Ovary (tissue), 10 donors: ENCODE measurements at regions of chr18 and their contacts with region 1.

Region 1: GRCh38 chr18:22169007-22169864 is at the start of gene GATA6:
- DNase-seq: peak; percentile 94 to 96 (median 95)
- H3K4me3 ChIP-seq: peak within 1 kb of the TSS; percentile 98
- H3K27ac ChIP-seq: peak within 1 kb of the TSS; percentile 96 to 97
- H3K4me1 ChIP-seq: peaks cover 4% of the 10 kb centered on the region
- H3K27me3 ChIP-seq: no peaks in the 10 kb centered on the region
- CTCF ChIP-seq: peak in 2 of 3 donors; percentile 50 to 64
- EP300 ChIP-seq: no peak
- POLR2A ChIP-seq: peak; percentile 83
- total RNA-seq, gene GATA6: 82.4 to 221 (median 140) TPM

Region 2: GRCh38 chr18:21997207-21998143 is 171.8 kb before region 1 on chr18:
- intact Hi-C with region 1: loop called in 1 of 4 experiments (anchors 10 kb)
- DNase-seq: peak in 2 of 5 donors; percentile 19 to 38
- H3K4me3 ChIP-seq: no peak overlapping the region
- H3K27ac ChIP-seq: no peak overlapping the region
- H3K4me1 ChIP-seq: no peaks in the 10 kb centered on the region
- H3K27me3 ChIP-seq: no peaks in the 10 kb centered on the region
- CTCF ChIP-seq: peak; percentile 38 to 64 (median 52)
- EP300 ChIP-seq: no peak
- POLR2A ChIP-seq: no peak

Region 3: DNA sequence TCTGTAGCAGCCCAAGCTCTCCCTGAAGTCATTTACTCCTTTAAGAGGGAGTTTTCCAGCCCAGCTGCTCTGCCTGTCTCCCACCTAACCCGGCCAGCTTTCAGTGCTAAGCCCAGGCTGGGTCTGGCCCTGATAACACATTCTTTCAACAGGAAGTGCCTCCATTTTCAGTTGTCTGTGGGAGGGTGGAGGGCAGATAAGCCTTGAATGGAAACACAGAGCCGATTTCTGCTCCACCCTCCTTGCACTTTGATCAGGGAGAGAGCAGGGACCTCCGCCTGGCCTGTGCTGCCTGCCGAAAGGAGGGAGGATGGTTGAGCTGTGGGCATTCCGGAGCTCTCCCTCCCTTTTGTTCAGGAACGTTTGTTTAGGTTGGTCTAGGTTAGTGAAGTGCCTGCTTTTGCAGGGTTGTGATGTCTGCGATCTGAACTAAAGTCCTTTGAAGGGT is 24.9 kb after region 1 on chr18:
- intact Hi-C with region 1: no loop called
- DNase-seq: peak in 3 of 5 donors; percentile 52 to 65 (median 59)
- H3K4me3 ChIP-seq: peak overlapping the region; percentile 10
- H3K27ac ChIP-seq: peak overlapping the region; percentile 22 to 70
- H3K4me1 ChIP-seq: peaks cover 14% of the 10 kb centered on the region
- H3K27me3 ChIP-seq: no peaks in the 10 kb centered on the region
- CTCF ChIP-seq: no peak
- EP300 ChIP-seq: no peak
- POLR2A ChIP-seq: no peak

Region 4: DNA sequence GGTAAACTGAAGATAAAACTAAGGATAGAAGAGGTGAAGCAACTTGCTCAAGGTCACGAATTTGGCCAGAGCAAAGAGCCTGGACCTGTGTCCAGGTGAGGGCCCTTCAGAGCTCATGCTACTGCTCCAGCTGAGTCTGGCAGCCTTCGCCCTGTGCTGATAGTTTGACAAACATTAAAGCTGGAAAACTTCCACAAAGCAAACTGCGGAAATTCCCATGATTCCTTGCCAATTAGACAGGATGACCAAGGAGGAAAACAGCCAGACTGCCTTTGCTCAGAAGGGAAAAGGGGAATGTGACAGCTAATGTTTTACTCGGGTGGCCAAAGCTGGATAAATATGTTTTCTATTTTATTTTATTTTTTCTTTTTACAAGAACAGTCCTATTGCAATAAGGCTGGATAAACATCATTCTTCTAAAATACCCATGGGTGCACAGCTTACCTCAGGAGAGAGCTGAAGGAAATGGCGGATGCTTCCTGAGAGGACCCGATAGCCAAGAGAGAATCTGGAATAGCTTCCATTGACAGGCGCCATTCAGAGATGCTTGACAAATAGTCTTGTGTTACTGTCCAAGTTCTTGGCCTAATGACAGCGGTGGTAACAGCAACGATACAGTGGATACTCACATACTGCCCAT is 253.8 kb after region 1 on chr18:
- intact Hi-C with region 1: loop called in 1 of 4 experiments (anchors 10 kb)
- DNase-seq: no peak
- H3K4me3 ChIP-seq: no peak overlapping the region
- H3K27ac ChIP-seq: no peak overlapping the region
- H3K4me1 ChIP-seq: peaks cover 2% of the 10 kb centered on the region
- H3K27me3 ChIP-seq: no peaks in the 10 kb centered on the region
- CTCF ChIP-seq: no peak
- EP300 ChIP-seq: no peak
- POLR2A ChIP-seq: no peak

Region 5: GRCh38 chr18:22465859-22466457 is 296.7 kb after region 1 on chr18:
- intact Hi-C with region 1: loop called in 1 of 4 experiments (anchors 5 kb)
- DNase-seq: peak in 2 of 5 donors; percentile 35 to 56
- H3K4me3 ChIP-seq: no peak overlapping the region
- H3K27ac ChIP-seq: peak overlapping the region in 1 of 2 donors; percentile 3
- H3K4me1 ChIP-seq: peaks cover 24% of the 10 kb centered on the region
- H3K27me3 ChIP-seq: no peaks in the 10 kb centered on the region
- CTCF ChIP-seq: no peak
- EP300 ChIP-seq: no peak
- POLR2A ChIP-seq: no peak

Region 6: DNA sequence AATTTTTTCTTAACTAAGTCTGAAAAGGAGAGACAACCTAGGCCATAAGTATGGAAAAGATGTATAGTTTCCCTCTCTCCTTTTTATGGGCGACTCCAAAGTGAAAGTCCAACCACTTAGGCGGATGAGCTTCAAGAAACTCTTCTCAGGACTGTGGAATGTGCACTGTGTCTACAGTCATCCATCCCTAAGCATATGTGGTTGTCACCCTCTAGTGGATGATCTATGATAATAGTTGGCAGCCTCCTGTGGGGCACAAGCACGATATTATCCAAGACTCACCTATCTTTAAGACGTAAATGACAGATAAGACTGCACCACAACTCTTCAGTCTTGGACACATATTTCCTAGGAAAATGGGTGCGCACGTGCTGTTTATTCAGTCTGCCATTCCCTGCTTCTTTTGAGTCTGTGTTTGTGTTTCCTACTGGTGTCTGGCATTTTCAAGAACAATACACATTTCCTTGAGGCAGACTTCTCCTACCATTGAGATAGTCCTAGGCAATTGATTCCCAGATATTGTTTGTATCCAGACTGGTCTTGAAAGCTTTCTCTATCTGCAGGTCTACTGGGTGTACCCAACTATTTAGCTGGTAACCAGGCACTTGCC is 394.0 kb after region 1 on chr18:
- intact Hi-C with region 1: loop called (anchors 2 to 5 kb)
- DNase-seq: peak in 2 of 5 donors; percentile 35 to 59
- H3K4me3 ChIP-seq: no peak overlapping the region
- H3K27ac ChIP-seq: no peak overlapping the region
- H3K4me1 ChIP-seq: no peaks in the 10 kb centered on the region
- H3K27me3 ChIP-seq: no peaks in the 10 kb centered on the region
- CTCF ChIP-seq: peak; percentile 80 to 90 (median 88)
- EP300 ChIP-seq: peak; percentile 11
- POLR2A ChIP-seq: no peak

Region 7: DNA sequence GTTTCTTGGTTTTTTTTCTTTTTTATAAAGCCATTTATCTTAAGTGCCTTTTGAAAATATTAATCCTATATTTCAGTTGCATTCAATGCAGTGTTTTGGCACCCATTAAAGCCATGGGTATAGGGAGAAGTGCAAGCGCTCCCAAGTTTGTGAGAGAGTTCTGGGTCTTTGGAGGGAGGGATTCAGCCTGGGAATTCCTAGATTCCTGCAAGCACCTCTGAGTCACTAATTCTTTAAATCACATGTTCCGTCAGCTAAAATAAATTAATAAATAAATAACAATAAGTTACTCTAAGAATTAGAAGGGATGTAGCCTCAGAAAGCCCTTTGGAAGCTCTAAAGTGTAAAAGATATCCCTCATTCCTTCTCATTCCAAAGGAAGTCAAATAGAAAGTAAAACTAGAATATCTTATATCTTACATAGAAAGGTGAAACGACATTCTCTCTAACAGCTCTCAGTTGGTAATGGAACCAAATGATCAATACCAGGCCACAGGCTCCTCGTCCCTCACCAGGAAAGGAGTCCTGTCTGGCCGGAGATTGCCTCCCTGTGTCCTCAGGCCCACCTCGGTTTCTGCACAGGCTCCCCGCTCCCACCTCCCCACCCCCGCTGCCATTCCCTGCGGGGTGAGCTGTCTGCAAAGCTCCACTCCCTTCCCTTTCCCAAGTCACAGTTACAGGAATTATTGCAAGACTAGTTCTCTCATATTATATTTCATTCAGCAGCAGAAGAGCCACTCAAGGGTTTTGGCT is 541.6 kb after region 1 on chr18:
- intact Hi-C with region 1: loop called in 1 of 4 experiments (anchors 10 kb)
- DNase-seq: peak; percentile 40 to 57 (median 51)
- H3K4me3 ChIP-seq: peak overlapping the region; percentile 19
- H3K27ac ChIP-seq: peak overlapping the region; percentile 4 to 58
- H3K4me1 ChIP-seq: peaks cover 9% of the 10 kb centered on the region
- H3K27me3 ChIP-seq: no peaks in the 10 kb centered on the region
- CTCF ChIP-seq: no peak
- EP300 ChIP-seq: no peak
- POLR2A ChIP-seq: no peak